Ovary (tissue), 10 donors: ENCODE measurements at regions of chr5 and their contacts with region 1.

Region 1: DNA sequence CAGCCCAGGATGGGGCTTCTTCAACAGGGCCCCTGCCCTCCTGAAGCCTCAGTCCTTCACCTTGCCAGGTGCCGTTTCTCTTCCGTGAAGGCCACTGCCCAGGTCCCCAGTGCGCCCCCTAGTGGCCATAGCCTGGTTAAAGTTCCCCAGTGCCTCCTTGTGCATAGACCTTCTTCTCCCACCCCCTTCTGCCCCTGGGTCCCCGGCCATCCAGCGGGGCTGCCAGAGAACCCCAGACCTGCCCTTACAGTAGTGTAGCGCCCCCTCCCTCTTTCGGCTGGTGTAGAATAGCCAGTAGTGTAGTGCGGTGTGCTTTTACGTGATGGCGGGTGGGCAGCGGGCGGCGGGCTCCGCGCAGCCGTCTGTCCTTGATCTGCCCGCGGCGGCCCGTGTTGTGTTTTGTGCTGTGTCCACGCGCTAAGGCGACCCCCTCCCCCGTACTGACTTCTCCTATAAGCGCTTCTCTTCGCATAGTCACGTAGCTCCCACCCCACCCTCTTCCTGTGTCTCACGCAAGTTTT is 23.6 kb downstream of the PCDHGC5 start:
- DNase-seq: peak; percentile 82 to 91 (median 89)
- H3K4me3 ChIP-seq: peak overlapping the region; percentile 64
- H3K27ac ChIP-seq: peak overlapping the region; percentile 74 to 82
- H3K4me1 ChIP-seq: peaks cover 17% of the 10 kb centered on the region
- H3K27me3 ChIP-seq: no peaks in the 10 kb centered on the region
- CTCF ChIP-seq: peak; percentile 76 to 82 (median 80)
- EP300 ChIP-seq: no peak
- POLR2A ChIP-seq: no peak

Region 2: DNA sequence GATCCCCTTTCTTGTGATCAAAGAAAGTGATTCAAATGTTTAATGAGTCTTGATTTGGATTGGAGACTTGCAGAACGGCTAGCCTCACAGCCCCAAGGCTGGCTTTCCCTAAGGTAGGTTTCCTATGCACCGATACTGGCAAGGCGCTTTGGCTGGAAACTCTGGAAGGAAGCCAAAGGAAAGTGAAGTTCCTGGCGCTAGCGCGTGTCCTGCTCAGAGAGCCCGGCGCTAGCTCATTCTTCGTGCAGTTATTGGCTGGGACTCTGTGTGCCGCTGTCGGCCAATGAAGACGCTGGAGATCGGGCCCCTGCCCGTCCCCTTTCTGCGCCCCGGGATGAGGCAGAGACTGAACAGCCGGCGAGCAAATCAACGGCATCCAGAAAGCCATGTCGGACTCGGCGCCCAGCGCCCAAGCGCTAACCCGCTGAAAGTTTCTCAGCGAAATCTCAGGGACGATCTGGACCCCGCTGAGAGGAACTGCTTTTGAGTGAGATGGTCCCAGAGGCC is 36.8 kb before region 1 on chr5 and contains the start of gene PCDHGC3:
- intact Hi-C with region 1: loop called in 3 of 4 experiments (anchors 2 to 5 kb)
- DNase-seq: peak; percentile 91 to 94 (median 93)
- H3K4me3 ChIP-seq: peak within 1 kb of the TSS; percentile 59
- H3K27ac ChIP-seq: peak within 1 kb of the TSS; percentile 26 to 75
- H3K4me1 ChIP-seq: peaks cover 17% of the 10 kb centered on the region
- H3K27me3 ChIP-seq: no peaks in the 10 kb centered on the region
- CTCF ChIP-seq: peak in 2 of 3 donors; percentile 50 to 73
- EP300 ChIP-seq: no peak
- POLR2A ChIP-seq: peak; percentile 77
- total RNA-seq, gene PCDHGC3: 19.6 to 85.3 (median 67.7) TPM